Activated T-helper 2 cell treated with anti-CD3 and anti-CD28 coated beads, Interferon-gamma antibody, Interleukin-2, Interleukin-4, amounts not matched to agents 10 μg/mL and 5 μg/mL and 100 μg/mL, durations not matched to agents 14 hours and 24 hours and 36 hours (primary cell): ENCODE measurements at regions of chr13 and their contacts with region 1.

Region 1: DNA sequence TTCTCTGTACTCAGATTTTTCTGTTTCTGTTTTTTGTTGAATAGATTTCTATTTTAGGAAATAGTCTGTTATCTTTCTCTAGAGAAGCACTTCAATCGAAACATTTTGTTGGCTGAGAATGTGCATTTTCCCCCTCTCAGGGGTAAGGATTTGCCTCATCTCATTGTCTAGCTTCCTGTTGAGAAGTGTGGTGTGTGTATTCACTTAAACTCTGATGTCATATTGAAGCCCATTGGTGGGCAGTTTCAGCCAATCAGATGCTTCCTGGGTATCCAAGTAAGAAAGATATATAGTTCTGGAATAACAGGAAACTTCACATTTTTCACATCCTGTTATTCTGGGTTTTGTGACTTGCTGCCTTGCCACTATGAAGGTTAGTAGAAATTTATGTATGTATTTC is 87.6 kb downstream of the ARHGEF7 start:
- DNase-seq: no peak
- H3K4me3 Mint-ChIP-seq: no peak overlapping the region
- H3K27ac Mint-ChIP-seq: peak overlapping the region; percentile 40
- H3K4me1 Mint-ChIP-seq: peaks cover 54% of the 10 kb centered on the region
- H3K27me3 Mint-ChIP-seq: no peaks in the 10 kb centered on the region

Region 2: GRCh38 chr13:111153279-111153976 is 49.3 kb before region 1 on chr13:
- intact Hi-C with region 1: loop called (anchors 5 kb)
- DNase-seq: peak; percentile 91
- H3K4me3 Mint-ChIP-seq: peak overlapping the region; percentile 91
- H3K27ac Mint-ChIP-seq: peak overlapping the region; percentile 95
- H3K4me1 Mint-ChIP-seq: peaks cover 25% of the 10 kb centered on the region
- H3K27me3 Mint-ChIP-seq: peaks cover 30% of the 10 kb centered on the region

Region 3: GRCh38 chr13:111184458-111185401 is 18.0 kb before region 1 on chr13:
- intact Hi-C with region 1: loop called (anchors 1 kb)
- DNase-seq: no peak
- H3K4me3 Mint-ChIP-seq: peak overlapping the region; percentile 37
- H3K27ac Mint-ChIP-seq: peak overlapping the region; percentile 50
- H3K4me1 Mint-ChIP-seq: peaks cover 82% of the 10 kb centered on the region
- H3K27me3 Mint-ChIP-seq: no peaks in the 10 kb centered on the region

Region 4: DNA sequence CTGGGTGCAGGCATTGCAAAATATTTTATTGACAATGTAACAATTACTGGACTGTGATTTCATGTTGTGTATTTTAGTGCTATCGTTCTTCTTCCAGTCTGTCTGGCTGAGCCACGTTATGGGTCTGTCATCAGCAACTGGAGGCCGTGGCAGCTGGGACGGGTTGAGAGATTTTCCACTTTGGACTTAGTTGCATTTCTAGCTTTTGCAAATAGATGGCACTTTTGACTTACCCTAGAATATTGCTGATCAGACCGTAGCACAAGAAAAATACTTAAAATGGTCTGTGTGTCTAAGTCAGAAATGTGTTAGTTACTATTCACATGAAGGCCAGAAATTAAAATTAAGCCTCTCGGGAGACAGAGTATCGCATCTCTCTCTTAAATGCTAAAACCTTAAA is 328.8 kb after region 1 on chr13:
- intact Hi-C with region 1: no loop called
- DNase-seq: no peak
- H3K4me3 Mint-ChIP-seq: no peak overlapping the region
- H3K27ac Mint-ChIP-seq: no peak overlapping the region
- H3K4me1 Mint-ChIP-seq: no peaks in the 10 kb centered on the region
- H3K27me3 Mint-ChIP-seq: peaks cover 44% of the 10 kb centered on the region